Psoas muscle (tissue), 8 donors: ENCODE measurements at regions of chr1 and their contacts with region 1.

Region 1: DNA sequence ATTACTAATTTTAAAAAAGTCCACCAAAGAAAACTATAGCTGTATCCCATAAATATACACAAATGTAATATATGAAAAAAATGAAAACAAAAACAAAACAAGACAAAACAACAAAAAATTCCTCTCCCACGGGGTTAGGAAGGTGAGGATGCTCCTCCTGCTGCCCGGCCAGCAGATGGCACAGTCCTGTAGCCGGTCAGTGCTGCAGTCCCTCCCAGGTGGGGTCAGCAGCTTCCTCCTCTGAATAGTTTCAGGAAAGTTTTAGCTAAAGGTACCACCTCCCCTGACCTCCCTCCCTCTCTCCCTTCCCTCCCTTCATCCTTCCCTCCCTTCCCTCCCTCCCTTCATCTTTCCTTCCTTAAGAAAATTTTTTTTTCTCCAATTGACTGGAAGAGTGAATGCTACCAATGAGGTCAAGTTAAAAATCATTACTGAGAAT is 67.8 kb upstream of the BCL10 start:
- DNase-seq: no peak
- ATAC-seq: peak; percentile 61 to 67 (median 66)
- H3K4me3 ChIP-seq: no peak overlapping the region
- H3K27ac ChIP-seq: peak overlapping the region; percentile 53
- H3K4me1 ChIP-seq: peaks cover 37% of the 10 kb centered on the region
- H3K27me3 ChIP-seq: no peaks in the 10 kb centered on the region
- CTCF ChIP-seq: peak; percentile 73

Region 2: DNA sequence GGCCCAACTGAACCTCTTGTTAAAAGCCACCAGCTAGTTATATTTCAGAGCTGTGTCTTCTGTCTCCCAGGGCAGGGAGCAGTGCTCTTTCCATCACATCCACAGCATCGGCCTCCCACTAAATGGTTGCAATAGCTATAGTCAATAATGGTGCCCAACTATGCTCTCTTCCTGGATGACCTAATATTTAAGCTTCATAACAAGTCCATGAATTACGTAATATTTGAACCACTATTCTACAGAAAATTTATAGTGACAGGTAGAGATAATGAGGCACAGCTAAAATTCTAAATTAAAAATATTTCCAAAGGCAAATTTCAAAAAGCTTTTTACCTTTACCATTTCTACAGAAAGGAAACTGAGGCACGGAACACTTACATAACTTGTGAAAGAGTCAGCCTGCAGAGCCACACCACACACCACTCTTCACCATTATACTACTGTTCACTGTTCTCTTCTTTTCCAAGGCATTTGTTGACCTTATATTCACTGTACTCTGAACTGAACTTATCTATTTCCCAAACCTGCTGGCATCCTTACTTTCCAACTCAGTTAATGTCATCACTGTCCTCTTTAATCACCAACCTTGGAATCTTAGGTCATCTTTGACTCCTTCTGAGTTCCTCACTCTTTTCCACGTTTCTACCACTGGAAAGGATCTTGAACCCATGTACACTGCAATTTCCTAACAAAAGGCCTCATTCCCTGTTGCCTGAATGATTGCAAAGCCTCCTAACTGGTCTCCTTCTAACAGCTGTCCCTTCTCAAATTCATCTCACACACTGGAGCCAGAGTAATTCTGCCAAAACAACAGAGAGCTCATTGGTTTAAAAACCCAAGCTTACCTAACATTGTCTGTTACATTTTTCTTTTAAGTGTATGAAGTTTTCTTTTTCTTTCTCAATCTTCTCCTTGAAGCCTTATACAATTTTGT is 35.2 kb after region 1 on chr1:
- intact Hi-C with region 1: loop called in 1 of 2 experiments (anchors 5 kb)
- DNase-seq: no peak
- ATAC-seq: peak; percentile 68 to 75 (median 72)
- H3K4me3 ChIP-seq: peak overlapping the region; percentile 5
- H3K27ac ChIP-seq: peak overlapping the region; percentile 43
- H3K4me1 ChIP-seq: peaks cover 14% of the 10 kb centered on the region
- H3K27me3 ChIP-seq: no peaks in the 10 kb centered on the region
- CTCF ChIP-seq: no peak

Region 3: GRCh38 chr1:85404408-85404807 is 60.1 kb after region 1 on chr1:
- intact Hi-C with region 1: loop called in 1 of 2 experiments (anchors 5 kb)
- DNase-seq: no peak
- ATAC-seq: no peak
- H3K4me3 ChIP-seq: no peak overlapping the region
- H3K27ac ChIP-seq: no peak overlapping the region
- H3K4me1 ChIP-seq: peaks cover 15% of the 10 kb centered on the region
- H3K27me3 ChIP-seq: no peaks in the 10 kb centered on the region
- CTCF ChIP-seq: no peak

Region 4: GRCh38 chr1:85464497-85465098 is 120.3 kb after region 1 on chr1:
- intact Hi-C with region 1: loop called in 1 of 2 experiments (anchors 10 kb)
- DNase-seq: peak; percentile 76 to 78
- ATAC-seq: peak; percentile 72 to 86 (median 78)
- H3K4me3 ChIP-seq: peak overlapping the region; percentile 85
- H3K27ac ChIP-seq: peak overlapping the region; percentile 70
- H3K4me1 ChIP-seq: peaks cover 6% of the 10 kb centered on the region
- H3K27me3 ChIP-seq: no peaks in the 10 kb centered on the region
- CTCF ChIP-seq: no peak